Right cardiac atrium (tissue), 5 donors: ENCODE measurements at regions of chr22 and their contacts with region 1.

Region 1: DNA sequence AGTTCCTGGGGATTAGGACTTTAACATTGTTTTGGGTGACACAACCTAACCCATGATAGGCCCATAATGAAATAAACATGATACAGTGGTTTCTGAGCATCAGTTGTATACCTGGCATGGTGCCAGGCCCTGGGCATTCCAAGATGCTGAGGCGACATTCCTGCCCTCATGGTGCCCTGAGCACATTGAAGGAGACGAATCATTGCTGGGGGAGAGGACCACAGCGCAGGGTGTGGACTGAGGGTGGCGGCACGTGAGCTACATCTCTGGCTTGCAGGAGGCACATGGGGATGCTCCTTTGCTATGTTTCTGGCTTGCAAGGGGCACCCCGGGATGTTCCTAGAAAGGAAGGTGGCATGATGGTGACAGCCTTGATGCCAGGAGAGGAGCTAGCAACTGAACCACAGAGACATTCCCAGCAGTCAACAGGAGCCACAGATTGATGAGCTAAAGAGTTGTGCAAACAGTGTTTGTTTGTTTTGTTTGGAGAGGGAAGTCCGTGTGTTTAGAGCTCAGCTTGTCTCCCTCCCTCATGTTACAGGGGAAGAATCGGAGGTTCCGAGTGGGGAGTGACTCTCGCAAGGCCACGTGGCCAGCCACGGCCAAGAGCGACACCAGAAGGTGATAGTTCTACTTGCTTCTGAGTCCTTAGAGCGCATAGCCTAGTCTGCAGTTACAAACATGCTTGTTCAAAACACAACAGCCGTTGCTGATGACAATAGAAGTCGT is 106.4 kb downstream of the MIAT start:
- DNase-seq: no peak
- ATAC-seq: no peak
- H3K4me3 ChIP-seq: no peak overlapping the region
- H3K27ac ChIP-seq: no peak overlapping the region
- H3K4me1 ChIP-seq: no peaks in the 10 kb centered on the region
- H3K27me3 ChIP-seq: no peaks in the 10 kb centered on the region

Region 2: GRCh38 chr22:26689513-26690301 is 74.1 kb before region 1 on chr22:
- intact Hi-C with region 1: no loop called
- DNase-seq: no peak
- ATAC-seq: peak in 1 of 2 donors; percentile 18
- H3K4me3 ChIP-seq: no peak overlapping the region
- H3K27ac ChIP-seq: no peak overlapping the region
- H3K4me1 ChIP-seq: no peaks in the 10 kb centered on the region
- H3K27me3 ChIP-seq: no peaks in the 10 kb centered on the region

Region 3: GRCh38 chr22:26887456-26887855 is 123.7 kb after region 1 on chr22:
- intact Hi-C with region 1: no loop called
- DNase-seq: peak in 1 of 3 donors; percentile 38
- ATAC-seq: peak; percentile 30 to 67
- H3K4me3 ChIP-seq: no peak overlapping the region
- H3K27ac ChIP-seq: no peak overlapping the region
- H3K4me1 ChIP-seq: no peaks in the 10 kb centered on the region
- H3K27me3 ChIP-seq: no peaks in the 10 kb centered on the region

Region 4: GRCh38 chr22:27045103-27045947 is 281.5 kb after region 1 on chr22:
- intact Hi-C with region 1: no loop called
- DNase-seq: no peak
- ATAC-seq: peak in 1 of 2 donors; percentile 40
- H3K4me3 ChIP-seq: no peak overlapping the region
- H3K27ac ChIP-seq: no peak overlapping the region
- H3K4me1 ChIP-seq: no peaks in the 10 kb centered on the region
- H3K27me3 ChIP-seq: no peaks in the 10 kb centered on the region

Region 5: GRCh38 chr22:27825174-27825573 is 1061.4 kb after region 1 on chr22:
- intact Hi-C with region 1: loop called in 1 of 4 experiments (anchors 10 kb)
- DNase-seq: no peak
- ATAC-seq: no peak
- H3K4me3 ChIP-seq: no peak overlapping the region
- H3K27ac ChIP-seq: no peak overlapping the region
- H3K4me1 ChIP-seq: no peaks in the 10 kb centered on the region
- H3K27me3 ChIP-seq: no peaks in the 10 kb centered on the region